Astrocyte of the cerebellum (primary cell): ENCODE measurements at regions of chr6 and their contacts with region 1.

Region 1: DNA sequence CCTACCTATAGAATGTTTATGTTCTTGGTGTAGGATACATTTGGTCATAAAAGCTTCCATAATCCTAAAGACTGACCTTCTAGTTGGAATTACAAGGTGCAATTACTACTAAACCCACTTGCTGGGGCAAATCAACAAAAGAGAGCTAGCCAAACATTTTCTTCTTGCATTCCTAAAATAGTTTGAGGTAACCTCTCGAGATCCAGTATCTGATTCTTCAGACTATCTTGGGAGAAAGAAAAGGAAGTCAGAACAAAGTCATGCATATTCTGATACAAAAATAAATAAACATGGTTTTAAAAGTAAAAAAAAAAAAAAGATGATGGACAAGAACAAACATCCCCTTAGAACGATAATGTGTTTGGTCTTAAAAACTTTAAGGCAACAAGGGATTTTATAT is 294.2 kb upstream of the RSPO3 start:
- DNase-seq: no peak
- H3K4me3 ChIP-seq: no peak overlapping the region
- CTCF ChIP-seq: no peak

Region 2: DNA sequence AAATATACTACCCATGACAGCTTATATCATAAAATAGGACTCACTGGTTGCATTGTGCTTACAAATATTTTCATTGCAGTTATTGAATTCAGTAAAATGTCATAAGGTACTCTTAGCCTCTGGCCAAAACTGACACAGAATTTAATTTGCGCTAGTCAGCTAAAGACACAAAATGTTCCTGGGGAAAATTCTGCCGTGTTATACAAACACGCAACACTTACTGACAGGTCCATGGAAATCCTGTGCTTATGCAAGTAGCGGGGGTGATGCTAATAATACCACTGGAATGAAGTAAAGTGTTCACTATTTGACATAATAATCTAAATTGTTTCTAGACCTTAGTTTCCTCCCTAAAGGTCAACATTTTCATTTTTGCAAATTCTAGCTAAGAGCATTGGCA is 60.1 kb before region 1 on chr6:
- in situ Hi-C with region 1: loop called (anchors 10 kb)
- DNase-seq: no peak
- H3K4me3 ChIP-seq: no peak overlapping the region
- CTCF ChIP-seq: no peak

Region 3: DNA sequence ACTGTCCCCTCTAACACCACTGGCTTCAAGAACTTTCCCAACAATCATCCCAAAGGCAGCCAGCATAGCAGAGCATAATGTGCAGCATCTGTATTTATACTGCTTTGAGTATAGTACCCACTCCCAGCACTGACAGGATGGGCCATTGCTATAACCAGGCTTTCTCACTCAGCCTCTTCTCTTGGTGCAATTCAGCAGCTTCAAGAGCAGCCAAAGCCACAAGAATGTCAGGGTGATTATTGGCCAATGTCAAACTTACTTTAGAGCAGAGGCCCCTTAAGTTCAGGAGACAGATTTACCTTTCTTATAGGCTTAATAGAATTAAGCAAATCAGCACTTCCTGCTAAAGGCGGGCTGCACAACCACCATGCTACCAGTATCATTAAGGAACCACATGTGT is 61.9 kb after region 1 on chr6:
- in situ Hi-C with region 1: loop called (anchors 10 kb)
- DNase-seq: peak; percentile 12
- H3K4me3 ChIP-seq: no peak overlapping the region
- CTCF ChIP-seq: no peak